BJ (cell line): ENCODE measurements at regions of chr6 and their contacts with region 1.

Region 1: GRCh38 chr6:41252401-41253169 is 24.4 kb downstream of the TREML4 start:
- DNase-seq: no peak
- H3K4me3 ChIP-seq: no peak overlapping the region
- H3K27me3 ChIP-seq: no peaks in the 10 kb centered on the region
- CTCF ChIP-seq: no peak

Region 2: DNA sequence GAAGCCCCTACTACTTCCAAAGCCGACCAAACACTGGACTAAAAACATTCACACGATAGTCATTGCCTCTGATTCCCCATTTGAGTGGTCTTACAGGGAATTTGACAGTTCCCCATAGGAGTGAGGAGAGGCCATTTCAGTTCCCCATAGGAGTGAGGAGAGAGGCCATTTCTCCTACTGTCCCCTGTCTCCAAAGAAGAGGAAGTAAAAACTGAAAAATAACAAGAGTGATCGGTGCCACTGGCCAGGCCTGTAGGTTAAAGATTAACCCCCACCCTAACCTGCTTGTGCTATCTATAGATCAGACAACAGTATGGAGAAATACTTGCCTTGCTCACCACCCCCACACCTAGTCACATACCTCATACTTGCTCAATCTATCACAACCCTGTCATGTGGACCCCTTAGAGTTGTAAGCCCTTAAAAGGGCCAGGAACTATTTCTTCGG is 1114.3 kb before region 1 on chr6:
- CTCF ChIA-PET with region 1: no interaction called
- POLR2A ChIA-PET with region 1: interaction called, 15 read pairs
- DNase-seq: no peak
- H3K4me3 ChIP-seq: no peak overlapping the region
- H3K27me3 ChIP-seq: no peaks in the 10 kb centered on the region
- CTCF ChIP-seq: no peak

Region 3: DNA sequence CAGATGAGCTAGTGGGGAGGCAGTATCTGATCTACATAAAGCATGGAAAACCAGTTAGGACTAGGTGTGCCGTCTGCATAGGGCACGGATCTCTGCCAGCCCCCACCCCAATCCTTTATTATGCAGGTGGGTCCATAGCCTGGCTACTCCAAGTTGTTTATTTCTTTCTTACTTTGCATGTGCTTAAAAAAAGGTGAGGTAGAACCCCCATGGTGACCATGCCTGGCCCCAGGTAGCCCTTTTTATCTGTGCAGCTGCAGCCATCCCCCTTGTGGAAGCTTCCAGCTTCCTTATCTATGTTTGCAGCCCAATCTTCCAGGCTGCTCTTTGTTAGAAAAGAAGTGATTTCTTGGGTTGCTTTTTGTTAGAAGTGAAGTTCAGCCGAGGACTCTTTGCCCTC is 80.7 kb before region 1 on chr6:
- CTCF ChIA-PET with region 1: no interaction called
- POLR2A ChIA-PET with region 1: no interaction called
- DNase-seq: no peak
- H3K4me3 ChIP-seq: no peak overlapping the region
- H3K27me3 ChIP-seq: no peaks in the 10 kb centered on the region; the same call in 1 of the 2 replicates
- CTCF ChIP-seq: no peak